Posterior vena cava (tissue), 2 donors: ENCODE measurements at regions of chr2 and their contacts with region 1.

Region 1: GRCh38 chr2:188940171-188940570 is 34.0 kb upstream of the COL3A1 start:
- DNase-seq: no peak

Region 2: DNA sequence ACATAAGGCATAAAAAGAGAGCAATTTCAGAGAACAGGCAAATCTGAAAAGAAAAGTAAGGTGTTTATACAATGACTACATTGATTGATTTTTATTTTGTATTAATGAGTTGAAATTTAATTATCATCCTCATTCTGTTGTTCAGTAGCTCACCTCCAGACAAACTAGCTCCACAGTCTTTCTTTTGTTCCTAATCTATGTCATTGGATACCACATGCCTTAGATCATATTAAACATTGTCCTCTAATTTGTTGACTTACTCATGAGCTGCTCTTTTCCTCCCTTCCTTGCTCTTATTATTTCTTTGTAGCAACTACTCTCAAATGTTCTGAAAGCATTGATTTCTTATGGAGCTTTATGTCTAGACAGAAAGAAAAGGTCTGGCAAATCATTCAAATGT is 1905.7 kb before region 1 on chr2:
- intact Hi-C with region 1: no loop called
- DNase-seq: no peak

Region 3: GRCh38 chr2:188870289-188870688 is 69.9 kb before region 1 on chr2:
- intact Hi-C with region 1: no loop called
- DNase-seq: no peak

Region 4: DNA sequence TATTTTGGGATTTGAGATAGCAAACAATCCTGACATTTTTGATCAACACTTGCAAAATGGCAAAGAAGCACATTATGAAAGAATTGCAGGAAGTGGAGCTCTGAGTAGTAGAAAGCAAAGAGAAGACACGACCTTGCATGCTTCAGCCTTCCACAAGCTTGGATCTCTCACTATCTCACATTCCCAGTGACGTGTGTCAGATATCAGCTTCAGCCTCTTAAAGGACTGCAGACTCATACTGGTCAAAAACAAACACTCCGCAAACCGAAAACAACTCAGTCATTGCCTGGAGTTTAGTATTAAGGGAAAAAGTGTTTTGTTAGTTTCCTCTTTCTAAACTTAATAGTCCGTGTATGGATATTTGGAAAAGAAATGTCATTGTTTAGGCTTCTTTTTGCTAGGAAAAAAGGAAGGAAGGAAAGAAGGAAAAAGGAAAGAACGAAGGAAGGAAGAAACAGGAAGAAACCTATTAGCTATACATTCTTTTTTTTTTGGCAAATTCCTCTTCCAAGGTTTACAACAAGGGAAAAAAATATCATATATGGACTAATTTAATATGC is 673.0 kb after region 1 on chr2:
- intact Hi-C with region 1: loop called in 1 of 2 experiments (anchors 10 kb)
- DNase-seq: no peak